A549 (cell line): ENCODE measurements at regions of chr13 and their contacts with region 1.

Region 1: GRCh38 chr13:30395192-30396084 is 26.9 kb upstream of the UBE2L5 start:
- DNase-seq: peak; percentile 53 to 88
- ATAC-seq: peak; percentile 88 to 90
- H3K4me3 ChIP-seq: peak overlapping the region; percentile 55
- H3K27ac ChIP-seq: peak overlapping the region; percentile 87 to 89
- H3K4me1 ChIP-seq: peaks cover 11% of the 10 kb centered on the region
- CTCF ChIP-seq: no peak
- EP300 ChIP-seq: peak in 1 of 2 experiments; percentile 21; a peak in 1 of 5 replicates
- POLR2A ChIP-seq: no peak; the same call in 1 of the 2 replicates
- RAD21 ChIP-seq: no peak

Region 2: GRCh38 chr13:30306762-30307193 is 88.7 kb before region 1 on chr13:
- CTCF ChIA-PET with region 1: no interaction called
- POLR2A ChIA-PET with region 1: interaction called, 16 read pairs
- DNase-seq: peak; percentile 52 to 89
- ATAC-seq: peak; percentile 92 to 94
- H3K4me3 ChIP-seq: peak overlapping the region; percentile 87
- H3K27ac ChIP-seq: peak overlapping the region; percentile 98 to 99
- H3K4me1 ChIP-seq: peaks cover 36% of the 10 kb centered on the region
- CTCF ChIP-seq: no peak
- EP300 ChIP-seq: no peak
- POLR2A ChIP-seq: peak; percentile 24; the same call in 1 of the 2 replicates
- RAD21 ChIP-seq: no peak

Region 3: GRCh38 chr13:30334663-30335386 is 60.6 kb before region 1 on chr13:
- CTCF ChIA-PET with region 1: no interaction called
- POLR2A ChIA-PET with region 1: no interaction called
- DNase-seq: peak; percentile 25 to 44
- ATAC-seq: peak in 1 of 2 experiments; percentile 84; a peak in 3 of 6 replicates
- H3K4me3 ChIP-seq: no peak overlapping the region
- H3K27ac ChIP-seq: no peak overlapping the region
- H3K4me1 ChIP-seq: peaks cover 13% of the 10 kb centered on the region
- CTCF ChIP-seq: 0 out of 3 replicates have a peak, but pooled peaks have one; percentile 24
- EP300 ChIP-seq: no peak
- POLR2A ChIP-seq: no peak
- RAD21 ChIP-seq: peak in 1 of 2 experiments; percentile 49; a peak in 2 of 5 replicates

Region 4: GRCh38 chr13:30376426-30377311 is 18.8 kb before region 1 on chr13:
- CTCF ChIA-PET with region 1: no interaction called
- POLR2A ChIA-PET with region 1: no interaction called
- DNase-seq: no peak
- ATAC-seq: no peak
- H3K4me3 ChIP-seq: no peak overlapping the region
- H3K27ac ChIP-seq: no peak overlapping the region
- H3K4me1 ChIP-seq: no peaks in the 10 kb centered on the region
- CTCF ChIP-seq: no peak
- EP300 ChIP-seq: no peak
- POLR2A ChIP-seq: no peak
- RAD21 ChIP-seq: no peak

Region 5: DNA sequence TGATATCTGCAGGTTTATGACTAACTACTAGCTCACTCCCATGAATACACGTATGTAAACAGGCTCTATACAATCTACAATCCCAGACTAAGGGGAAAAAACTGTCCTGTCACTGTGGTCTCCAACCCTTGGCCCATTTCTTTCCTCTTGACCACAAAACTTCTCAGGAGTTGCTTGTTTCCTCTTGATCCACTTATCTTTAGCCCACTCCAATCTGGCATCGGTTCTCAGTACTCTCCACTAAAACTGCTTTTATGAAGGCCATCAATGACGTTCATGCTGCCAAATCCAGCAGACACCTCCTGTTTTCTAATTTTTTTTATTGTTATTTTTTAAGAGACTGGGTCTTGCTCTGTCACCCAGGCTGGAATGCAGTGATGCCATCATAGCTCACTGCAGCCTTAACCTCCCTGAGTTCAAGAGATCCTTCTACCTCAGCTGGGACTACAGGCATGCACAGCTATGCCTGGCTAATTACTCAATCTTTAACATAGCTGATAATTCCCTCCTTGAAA is 190.4 kb after region 1 on chr13:
- CTCF ChIA-PET with region 1: no interaction called
- POLR2A ChIA-PET with region 1: no interaction called
- DNase-seq: no peak
- ATAC-seq: no peak
- H3K4me3 ChIP-seq: no peak overlapping the region
- H3K27ac ChIP-seq: no peak overlapping the region
- H3K4me1 ChIP-seq: peaks cover 11% of the 10 kb centered on the region; the same call in 2 of the 3 replicates
- CTCF ChIP-seq: no peak
- EP300 ChIP-seq: no peak
- POLR2A ChIP-seq: no peak
- RAD21 ChIP-seq: no peak

Region 6: GRCh38 chr13:30673669-30674521 is 278.5 kb after region 1 on chr13:
- CTCF ChIA-PET with region 1: no interaction called
- POLR2A ChIA-PET with region 1: no interaction called
- DNase-seq: peak; percentile 55 to 88
- ATAC-seq: peak; percentile 97
- H3K4me3 ChIP-seq: peak overlapping the region; percentile 45
- H3K27ac ChIP-seq: peak overlapping the region; percentile 68 to 89
- H3K4me1 ChIP-seq: peaks cover 7% of the 10 kb centered on the region; the same call in 1 of the 3 replicates
- CTCF ChIP-seq: peak; percentile 50
- EP300 ChIP-seq: no peak; a peak in 1 of 5 replicates
- POLR2A ChIP-seq: peak; percentile 37
- RAD21 ChIP-seq: peak in 1 of 2 experiments; percentile 44; a peak in 3 of 5 replicates